ENCODE measurements at regions of chr1 and their contacts with region 1.

Region 1: GRCh38 chr1:157992031-157992832 is 1.2 kb upstream of the KIRREL1 start:
- DNase-seq: peak; percentile 46
- ATAC-seq: peak; percentile 68
- H3K4me3 Mint-ChIP-seq: peak overlapping the region; percentile 79
- H3K27ac Mint-ChIP-seq: no peak overlapping the region
- H3K4me1 Mint-ChIP-seq: peaks cover 16% of the 10 kb centered on the region
- H3K27me3 Mint-ChIP-seq: peaks cover 41% of the 10 kb centered on the region
- CTCF ChIP-seq: peak; percentile 30

Region 2: DNA sequence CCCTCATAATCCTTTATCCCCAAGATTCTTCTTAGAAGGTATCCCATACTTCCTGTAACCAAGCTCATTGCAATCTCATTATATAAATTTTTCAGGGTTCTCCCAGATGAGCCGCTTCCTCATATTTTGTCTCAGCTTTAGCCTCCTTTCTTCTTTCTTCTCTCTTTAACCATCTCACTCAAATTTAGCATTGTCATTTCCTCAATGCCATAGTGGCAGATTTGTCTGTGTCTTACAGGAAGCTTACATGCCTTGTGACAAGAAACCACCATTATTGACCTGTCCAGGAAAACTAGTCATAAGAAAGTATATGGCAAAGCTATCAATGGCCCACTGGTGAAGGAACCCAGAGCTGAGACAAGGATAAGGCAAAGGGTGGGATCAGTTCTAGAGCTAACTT is 209.3 kb before region 1 on chr1:
- CTCF ChIA-PET with region 1: no interaction called
- POLR2A ChIA-PET with region 1: no interaction called
- intact Hi-C with region 1: no loop called
- DNase-seq: no peak
- ATAC-seq: no peak
- H3K4me3 Mint-ChIP-seq: peak overlapping the region; percentile 25
- H3K27ac Mint-ChIP-seq: peak overlapping the region; percentile 77
- H3K4me1 Mint-ChIP-seq: peaks cover 98% of the 10 kb centered on the region
- H3K27me3 Mint-ChIP-seq: no peaks in the 10 kb centered on the region
- CTCF ChIP-seq: no peak

Region 3: GRCh38 chr1:157937744-157938143 is 54.5 kb before region 1 on chr1:
- CTCF ChIA-PET with region 1: interaction called, 4 read pairs
- POLR2A ChIA-PET with region 1: interaction called, 10 read pairs
- intact Hi-C with region 1: no loop called
- DNase-seq: no peak
- ATAC-seq: no peak
- H3K4me3 Mint-ChIP-seq: no peak overlapping the region
- H3K27ac Mint-ChIP-seq: no peak overlapping the region
- H3K4me1 Mint-ChIP-seq: no peaks in the 10 kb centered on the region
- H3K27me3 Mint-ChIP-seq: peaks cover 3% of the 10 kb centered on the region
- CTCF ChIP-seq: no peak

Region 4: DNA sequence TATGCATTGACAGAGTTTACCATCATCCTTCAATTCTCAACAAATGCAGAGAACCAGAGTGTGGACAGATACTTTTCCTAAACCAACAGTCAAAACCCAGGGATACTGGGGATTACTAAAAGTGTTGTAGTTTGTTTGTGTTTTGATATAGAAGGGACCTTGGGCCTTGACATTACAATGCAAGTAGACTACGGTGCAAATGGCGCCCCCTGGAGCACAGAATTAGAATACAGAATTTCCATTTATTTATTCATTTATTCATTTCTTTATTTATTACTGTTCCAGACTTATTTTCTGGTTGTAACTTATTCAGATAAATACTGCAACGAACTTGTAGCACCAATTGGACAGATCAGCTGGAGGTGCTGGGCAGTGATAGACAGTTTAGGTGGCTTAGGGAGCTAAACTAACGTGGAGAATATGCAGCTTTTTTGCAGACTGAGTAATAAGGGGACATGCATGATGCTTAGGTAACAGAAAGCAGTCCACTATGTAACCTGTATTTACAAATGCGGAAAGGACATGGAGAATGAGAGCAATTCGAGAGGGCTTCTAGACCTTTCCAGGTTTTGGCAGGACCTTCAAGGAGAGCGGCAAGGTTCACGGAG is 43.8 kb after region 1 on chr1:
- CTCF ChIA-PET with region 1: interaction called, 5 read pairs
- POLR2A ChIA-PET with region 1: no interaction called
- intact Hi-C with region 1: loop called (anchors 1 kb)
- DNase-seq: no peak
- ATAC-seq: no peak
- H3K4me3 Mint-ChIP-seq: no peak overlapping the region
- H3K27ac Mint-ChIP-seq: no peak overlapping the region
- H3K4me1 Mint-ChIP-seq: no peaks in the 10 kb centered on the region
- H3K27me3 Mint-ChIP-seq: peaks cover 20% of the 10 kb centered on the region
- CTCF ChIP-seq: no peak

Region 5: GRCh38 chr1:158329733-158330132 is 337.5 kb after region 1 on chr1:
- CTCF ChIA-PET with region 1: interaction called, 5 read pairs
- POLR2A ChIA-PET with region 1: no interaction called
- intact Hi-C with region 1: loop called (anchors 10 kb)
- DNase-seq: no peak
- ATAC-seq: peak; percentile 47
- H3K4me3 Mint-ChIP-seq: no peak overlapping the region
- H3K27ac Mint-ChIP-seq: no peak overlapping the region
- H3K4me1 Mint-ChIP-seq: peaks cover 26% of the 10 kb centered on the region
- H3K27me3 Mint-ChIP-seq: no peaks in the 10 kb centered on the region
- CTCF ChIP-seq: no peak

Region 6: DNA sequence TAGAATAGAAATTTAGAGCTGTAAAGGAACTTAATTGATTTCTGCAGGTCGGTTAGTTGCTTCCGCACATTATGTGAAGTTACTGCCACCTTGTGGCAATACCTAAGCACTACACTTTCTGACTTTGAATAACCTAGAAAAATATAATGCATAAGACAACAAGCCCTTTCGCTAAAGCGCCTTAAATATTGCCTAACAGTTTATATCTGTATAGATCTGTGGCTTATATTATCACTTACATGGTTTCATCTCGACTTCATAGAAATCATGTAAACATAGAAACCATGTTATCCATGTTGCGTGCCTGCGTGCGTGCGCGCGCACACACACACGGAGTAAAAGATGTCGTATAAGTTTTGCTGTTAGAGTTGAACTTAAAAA is 1006.5 kb after region 1 on chr1:
- CTCF ChIA-PET with region 1: interaction called, 10 read pairs
- POLR2A ChIA-PET with region 1: no interaction called
- intact Hi-C with region 1: loop called (anchors 1 kb)
- DNase-seq: no peak
- ATAC-seq: peak; percentile 83
- H3K4me3 Mint-ChIP-seq: no peak overlapping the region
- H3K27ac Mint-ChIP-seq: no peak overlapping the region
- H3K4me1 Mint-ChIP-seq: peaks cover 20% of the 10 kb centered on the region
- H3K27me3 Mint-ChIP-seq: no peaks in the 10 kb centered on the region
- CTCF ChIP-seq: peak; percentile 59